Dorsolateral prefrontal cortex (tissue), 120 donors: ENCODE measurements at regions of chr1 and their contacts with region 1.

Region 1: DNA sequence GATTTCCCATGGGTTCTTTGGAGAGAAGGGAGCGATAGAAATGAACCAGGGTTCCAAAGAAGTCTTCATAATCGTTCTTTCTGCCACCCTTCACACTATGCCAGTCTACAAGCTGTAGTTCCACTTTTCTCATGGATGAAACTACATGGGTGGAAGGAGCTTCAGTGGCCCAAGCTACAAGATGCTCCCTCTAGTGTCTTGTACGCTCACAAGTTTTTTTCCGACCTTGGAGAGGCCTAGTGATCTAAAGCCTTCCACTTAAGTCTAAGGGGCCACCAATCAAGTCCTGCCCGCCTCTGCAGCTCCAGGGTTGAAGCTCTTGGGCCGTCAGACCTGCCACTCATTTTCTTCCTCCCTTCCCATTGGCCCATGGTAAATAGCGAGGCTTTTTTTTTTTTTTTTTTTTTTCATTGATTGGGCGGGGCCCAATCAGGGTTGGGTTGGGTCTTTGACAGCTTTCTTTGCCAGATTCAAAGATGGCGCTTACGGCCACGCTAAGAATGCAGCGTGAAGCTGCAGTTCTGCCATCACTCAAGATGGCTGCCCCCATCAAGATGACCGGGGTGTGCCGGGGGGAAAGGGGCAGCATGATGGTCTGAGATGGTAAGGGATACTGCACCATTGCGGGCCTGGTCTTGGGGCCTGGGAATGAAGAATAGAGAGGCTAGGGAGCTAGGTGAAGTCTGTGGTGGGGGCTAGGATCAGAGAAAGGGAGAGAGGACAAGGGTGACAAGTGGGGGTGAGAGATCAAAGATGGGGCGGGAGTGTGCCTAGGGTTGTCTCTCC is at the start of gene TOMM40L:
- DNase-seq: peak; percentile 70 to 97 (median 93)
- H3K4me3 ChIP-seq: peak within 1 kb of the TSS; percentile 53 to 89 (median 75)
- H3K27ac ChIP-seq: peak within 1 kb of the TSS; percentile 49 to 94 (median 85)
- H3K27me3 ChIP-seq: no peaks in the 10 kb centered on the region
- CTCF ChIP-seq: peak; percentile 26 to 78 (median 63)
- total RNA-seq, gene TOMM40L: 20.2 to 44.3 (median 32.3) TPM

Region 2: DNA sequence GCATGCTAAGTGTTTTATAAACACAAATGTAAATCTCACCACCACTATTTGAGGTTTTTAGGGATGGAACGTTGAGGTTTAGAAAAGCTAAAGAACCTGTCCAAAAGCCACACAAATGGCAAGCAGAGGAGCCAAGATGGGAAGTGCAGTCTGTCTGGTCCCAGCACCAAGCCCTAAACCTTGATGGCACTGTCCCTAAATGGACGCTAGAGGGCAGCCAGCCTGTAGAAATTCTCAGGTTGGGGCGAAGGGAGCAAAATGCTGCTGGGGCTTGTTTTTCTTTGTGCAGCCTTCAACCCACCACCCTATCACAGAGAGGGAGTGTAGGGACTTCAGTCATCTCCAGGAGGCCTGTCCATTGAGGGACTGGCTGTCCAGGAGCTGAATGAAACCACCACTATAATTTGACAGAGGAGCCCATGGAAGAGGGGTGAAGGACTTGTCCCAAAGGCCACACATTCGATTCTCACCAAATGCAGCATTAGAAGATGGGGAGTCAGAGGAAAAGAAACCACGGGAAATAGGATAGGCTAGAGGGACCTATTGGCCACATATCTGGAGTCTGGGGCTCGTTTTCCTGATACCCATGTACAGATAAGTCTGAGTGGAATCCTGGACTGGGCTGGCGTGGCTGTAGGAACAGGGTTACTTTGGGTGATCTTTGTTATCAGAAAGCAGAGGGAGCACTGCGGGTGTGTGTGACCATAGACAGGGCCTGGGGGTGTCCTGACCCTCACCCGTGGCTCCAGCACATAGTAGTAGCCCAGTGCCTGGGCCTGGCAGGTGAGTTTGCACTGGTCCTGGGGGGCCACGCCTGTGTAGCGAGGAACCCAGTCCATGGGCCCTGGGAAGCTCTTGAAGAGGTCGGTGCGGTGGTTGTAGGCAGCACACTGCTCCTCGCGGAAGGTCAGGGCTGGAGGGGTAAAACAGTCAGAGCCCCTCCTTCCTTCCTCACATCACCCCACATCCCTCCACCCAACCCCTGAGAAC is 33.0 kb before region 1 on chr1:
- intact Hi-C with region 1: loop called in 1 of 2 experiments (anchors 5 kb)
- DNase-seq: peak in 7 of 10 donors; percentile 60 to 75 (median 70)
- H3K4me3 ChIP-seq: peak overlapping the region in 12 of 59 donors; percentile 3 to 98 (median 51)
- H3K27ac ChIP-seq: peak overlapping the region in 57 of 59 donors; percentile 23 to 100 (median 88)
- H3K27me3 ChIP-seq: no peaks in the 10 kb centered on the region
- CTCF ChIP-seq: peak; percentile 65 to 94 (median 86)

Region 3: GRCh38 chr1:161201828-161202725 is 23.6 kb before region 1 on chr1 and contains the start of gene NDUFS2:
- intact Hi-C with region 1: loop called (anchors 2 kb)
- DNase-seq: peak; percentile 96 to 100 (median 99)
- H3K4me3 ChIP-seq: peak within 1 kb of the TSS; percentile 51 to 98 (median 88)
- H3K27ac ChIP-seq: peak within 1 kb of the TSS; percentile 90 to 100 (median 99)
- H3K27me3 ChIP-seq: no peaks in the 10 kb centered on the region
- CTCF ChIP-seq: peak in 49 of 56 donors; percentile 5 to 71 (median 42)
- total RNA-seq, gene NDUFS2: 77.0 to 176 (median 131) TPM

Region 4: DNA sequence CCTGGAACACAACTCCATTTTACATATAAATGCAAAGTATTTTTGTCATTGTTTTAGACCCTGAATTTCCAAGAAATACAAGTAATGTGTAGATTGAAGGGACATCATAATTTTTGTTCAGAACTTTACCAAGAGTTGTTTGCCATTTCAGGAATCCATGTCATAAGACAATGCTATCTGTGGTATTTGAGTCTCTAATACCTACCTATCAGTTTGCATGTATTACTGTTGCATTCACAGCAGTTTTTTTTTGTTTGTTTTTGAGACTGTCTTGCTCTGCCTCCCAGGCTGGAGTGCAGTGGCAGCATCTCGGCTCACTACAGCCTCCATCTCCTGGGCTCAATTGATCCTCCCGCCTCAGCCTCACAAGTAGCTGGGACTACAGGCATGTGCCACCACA is 66.9 kb after region 1 on chr1:
- intact Hi-C with region 1: loop called (anchors 5 kb)
- DNase-seq: no peak
- H3K4me3 ChIP-seq: no peak overlapping the region
- H3K27ac ChIP-seq: no peak overlapping the region
- H3K27me3 ChIP-seq: no peaks in the 10 kb centered on the region
- CTCF ChIP-seq: no peak

Region 5: DNA sequence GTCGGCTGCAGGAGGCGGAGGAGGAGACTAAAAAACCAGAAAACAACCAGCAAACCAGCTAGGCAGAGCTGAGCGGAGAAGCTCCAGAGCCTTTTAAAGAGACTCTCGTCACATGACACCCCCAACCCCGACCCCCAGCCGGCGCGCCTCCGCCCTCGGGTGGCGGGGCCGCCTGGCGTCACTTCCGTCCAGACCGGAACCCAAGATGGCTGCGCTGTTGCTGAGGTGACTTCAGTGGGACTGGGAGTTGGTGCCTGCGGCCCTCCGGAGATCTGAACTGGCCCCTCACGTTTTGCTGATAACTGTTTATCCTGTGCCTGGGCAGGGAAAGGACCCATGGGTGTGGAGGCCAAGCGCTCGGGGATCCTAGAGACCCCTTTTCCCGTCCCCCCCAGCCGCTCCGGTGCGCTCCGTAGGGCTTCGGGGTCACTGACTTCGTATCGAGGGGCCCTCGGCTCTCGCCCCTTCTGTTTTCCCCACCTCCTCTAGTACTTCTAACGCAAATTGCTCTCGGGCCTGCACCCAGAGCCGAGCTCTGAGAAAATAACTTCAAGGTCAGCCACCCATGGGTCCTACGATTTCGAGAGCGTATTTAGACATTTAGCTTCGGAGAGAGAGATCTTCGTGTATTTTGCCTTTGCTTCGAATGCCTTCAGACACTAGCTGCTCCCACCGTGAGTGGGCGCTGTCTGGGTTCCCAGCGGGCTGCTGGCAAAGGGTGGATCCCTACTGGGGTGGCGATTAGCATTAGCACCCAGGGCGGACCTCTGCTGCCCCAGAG is 88.7 kb after region 1 on chr1 and contains the start of gene SDHC:
- intact Hi-C with region 1: loop called (anchors 5 kb)
- DNase-seq: peak; percentile 92 to 97 (median 94)
- H3K4me3 ChIP-seq: peak within 1 kb of the TSS; percentile 67 to 100 (median 92)
- H3K27ac ChIP-seq: peak within 1 kb of the TSS; percentile 89 to 100 (median 97)
- H3K27me3 ChIP-seq: no peaks in the 10 kb centered on the region
- CTCF ChIP-seq: peak in 24 of 56 donors; percentile 10 to 52 (median 23)
- total RNA-seq, gene SDHC: 139 to 247 (median 184) TPM

Region 6: DNA sequence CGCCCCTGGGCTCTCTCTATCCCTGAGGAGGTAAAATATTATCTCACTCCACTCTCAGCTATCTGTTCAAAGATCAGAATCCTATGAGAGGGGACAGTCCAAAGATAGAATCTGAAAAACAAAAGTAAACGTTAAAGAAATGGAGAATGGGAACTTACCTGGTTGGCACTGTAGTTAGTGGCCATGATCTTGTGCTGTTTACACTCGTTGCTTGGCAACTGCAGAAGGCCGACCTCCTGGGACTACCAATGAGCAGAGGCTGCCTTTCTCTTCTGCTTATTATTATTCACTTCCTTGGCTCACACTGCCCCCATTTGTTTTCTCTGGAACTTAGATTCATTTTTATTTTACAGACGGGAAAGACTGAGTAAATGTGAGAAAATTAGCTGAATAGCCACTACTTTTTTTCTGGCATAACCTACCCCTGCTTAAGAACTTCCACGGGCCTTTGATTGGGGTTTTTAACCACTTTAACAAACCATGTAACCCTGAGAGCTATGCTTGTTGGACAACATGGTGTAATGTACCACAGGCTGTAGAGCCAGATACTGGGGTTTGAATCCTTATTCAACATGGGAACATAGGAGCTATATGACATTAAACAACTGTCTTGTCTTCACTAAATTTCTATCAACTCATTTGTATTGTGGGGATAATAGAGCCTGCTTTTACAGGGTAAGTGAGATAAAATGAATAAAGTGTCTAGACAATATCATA is 142.1 kb after region 1 on chr1 and contains the start of gene CFAP126:
- intact Hi-C with region 1: loop called in 1 of 2 experiments (anchors 5 kb)
- DNase-seq: peak in 8 of 10 donors; percentile 53 to 77 (median 60)
- H3K4me3 ChIP-seq: peak within 1 kb of the TSS in 1 of 59 donors; percentile 21
- H3K27ac ChIP-seq: peak within 1 kb of the TSS in 50 of 59 donors; percentile 0 to 84 (median 61)
- H3K27me3 ChIP-seq: no peaks in the 10 kb centered on the region
- CTCF ChIP-seq: peak in 49 of 56 donors; percentile 13 to 68 (median 39)
- total RNA-seq, gene CFAP126: 0.55 to 7.3 (median 1.5) TPM in 84 of 120 experiments, not detected in the others

Region 7: DNA sequence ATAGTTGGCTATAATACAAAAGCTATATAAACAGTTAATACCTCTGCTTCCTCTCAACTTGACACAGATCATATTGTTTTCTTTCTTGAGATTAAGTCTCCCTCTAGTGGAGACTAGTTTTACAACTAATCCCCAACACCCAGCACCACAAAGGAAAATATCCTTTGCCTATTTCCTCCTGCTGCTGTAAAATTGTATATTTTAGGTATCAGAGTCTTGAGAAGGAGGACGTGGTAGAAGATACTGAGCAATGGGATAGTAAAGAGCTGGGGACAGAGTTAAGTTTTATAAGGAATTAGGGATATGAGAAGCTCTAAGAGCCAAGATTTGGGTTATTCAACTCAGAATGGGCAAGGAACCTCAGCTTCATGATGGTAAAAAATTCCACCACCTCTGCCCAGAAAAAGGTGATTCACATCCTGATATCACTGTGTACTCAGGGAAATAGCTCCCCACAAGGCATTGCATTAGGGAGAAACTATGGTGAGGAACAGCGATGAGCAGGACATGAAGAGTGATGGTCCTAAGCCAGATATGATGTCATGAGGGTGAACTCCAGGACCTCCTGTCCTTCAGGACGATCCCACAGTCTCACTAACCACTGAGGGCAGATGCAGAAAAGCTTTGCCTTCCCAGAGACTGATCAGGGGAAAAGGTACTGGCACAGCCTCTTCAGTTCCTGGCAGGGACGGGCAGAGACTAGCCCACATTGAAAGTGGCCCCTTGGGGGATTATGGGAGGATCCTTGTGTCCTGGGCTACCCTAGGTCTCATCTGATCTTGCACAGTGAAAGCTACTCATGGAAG is 156.7 kb after region 1 on chr1:
- intact Hi-C with region 1: loop called (anchors 2 to 5 kb)
- DNase-seq: no peak
- H3K4me3 ChIP-seq: no peak overlapping the region
- H3K27ac ChIP-seq: peak overlapping the region in 45 of 59 donors; percentile 13 to 83 (median 59)
- H3K27me3 ChIP-seq: no peaks in the 10 kb centered on the region
- CTCF ChIP-seq: peak; percentile 57 to 88 (median 77)